ENCODE measurements at regions of chr4 and their contacts with region 1.

Region 1: DNA sequence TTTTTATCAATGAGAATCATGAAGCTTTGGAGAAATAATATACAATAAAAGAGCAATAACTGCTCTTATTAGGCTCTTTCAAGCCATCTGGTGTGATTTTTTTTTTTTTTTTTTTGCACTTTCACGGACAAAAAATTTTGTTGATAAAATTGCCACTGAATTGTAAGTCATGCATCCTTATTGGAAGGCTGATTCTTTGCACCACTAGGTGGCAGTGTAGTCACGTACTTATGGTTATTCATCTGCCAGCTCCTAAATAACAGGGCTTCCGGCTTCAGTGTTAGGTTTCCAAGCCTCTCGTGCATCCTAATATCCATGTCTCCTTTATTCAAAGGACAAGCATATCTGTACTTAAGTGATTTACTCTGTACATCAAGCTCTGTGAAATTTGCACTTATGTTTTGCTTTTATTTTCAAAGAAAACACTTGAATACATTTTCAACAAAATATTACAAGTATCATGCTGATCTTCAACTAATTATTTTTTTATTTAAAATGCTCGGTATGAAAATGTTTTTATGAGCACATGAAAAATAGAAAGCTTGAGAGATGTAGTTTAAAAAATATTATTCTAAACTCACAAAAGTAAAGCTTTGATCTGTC is 1578.3 kb upstream of the TENM3 start:
- DNase-seq: peak; percentile 90
- ATAC-seq: peak; percentile 87
- H3K4me3 ChIP-seq: no peak overlapping the region
- H3K27ac ChIP-seq: no peak overlapping the region
- H3K4me1 ChIP-seq: no peaks in the 10 kb centered on the region
- H3K27me3 ChIP-seq: no peaks in the 10 kb centered on the region
- CTCF ChIP-seq: peak; percentile 85
- POLR2A ChIP-seq: no peak
- RAD21 ChIP-seq: peak; percentile 80

Region 2: DNA sequence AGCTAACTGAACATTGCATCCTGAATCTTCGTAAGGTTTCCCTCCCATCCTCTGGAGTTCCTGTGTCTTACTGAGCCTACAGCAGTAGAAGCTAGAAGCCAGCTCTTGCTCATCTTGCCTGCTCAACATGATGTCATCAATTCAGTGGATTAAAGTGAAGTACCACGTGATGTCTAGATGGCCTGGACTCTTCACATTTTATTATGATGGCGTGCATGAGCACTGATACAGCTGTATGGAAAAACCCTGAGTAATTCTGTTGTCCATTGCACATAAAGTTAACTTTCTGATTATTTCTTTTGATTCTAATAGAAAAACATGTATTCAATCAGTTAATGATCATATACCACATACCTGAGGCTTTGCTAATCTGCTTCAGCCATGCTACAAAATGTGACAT is 809.4 kb before region 1 on chr4:
- CTCF ChIA-PET with region 1: no interaction called
- POLR2A ChIA-PET with region 1: no interaction called
- dilution Hi-C with region 1: no loop called
- in situ Hi-C with region 1: no loop called
- intact Hi-C with region 1: no loop called
- DNase-seq: peak; percentile 57
- ATAC-seq: no peak
- H3K4me3 ChIP-seq: no peak overlapping the region
- H3K27ac ChIP-seq: no peak overlapping the region
- H3K4me1 ChIP-seq: no peaks in the 10 kb centered on the region
- H3K27me3 ChIP-seq: no peaks in the 10 kb centered on the region
- CTCF ChIP-seq: no peak
- POLR2A ChIP-seq: no peak
- RAD21 ChIP-seq: no peak

Region 3: GRCh38 chr4:180784940-180785339 is 120.1 kb after region 1 on chr4:
- CTCF ChIA-PET with region 1: no interaction called
- POLR2A ChIA-PET with region 1: no interaction called
- dilution Hi-C with region 1: no loop called
- in situ Hi-C with region 1: no loop called
- intact Hi-C with region 1: loop called (anchors 1 kb)
- DNase-seq: no peak
- ATAC-seq: no peak
- H3K4me3 ChIP-seq: no peak overlapping the region
- H3K27ac ChIP-seq: no peak overlapping the region
- H3K4me1 ChIP-seq: no peaks in the 10 kb centered on the region
- H3K27me3 ChIP-seq: no peaks in the 10 kb centered on the region
- CTCF ChIP-seq: no peak
- POLR2A ChIP-seq: no peak
- RAD21 ChIP-seq: no peak

Region 4: DNA sequence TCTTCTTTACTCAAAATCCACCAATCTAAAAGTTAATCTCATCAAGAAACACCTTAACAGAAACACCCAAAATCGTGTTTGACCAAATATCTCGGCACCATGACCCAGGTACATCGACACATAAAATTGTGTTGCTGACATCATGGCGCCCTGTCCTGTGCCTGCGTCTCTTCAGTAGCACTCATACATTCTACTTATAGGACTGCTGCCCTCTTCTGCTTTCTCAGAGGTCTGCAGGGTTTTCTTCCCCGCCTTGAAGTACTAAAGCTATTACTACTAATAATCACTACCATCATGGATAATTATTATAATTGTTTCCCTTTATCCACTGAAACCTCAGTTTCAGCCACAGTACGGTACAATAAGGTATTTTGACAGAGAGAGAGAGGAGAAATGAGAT is 175.3 kb after region 1 on chr4:
- CTCF ChIA-PET with region 1: interaction called, 3 read pairs
- POLR2A ChIA-PET with region 1: no interaction called
- dilution Hi-C with region 1: no loop called
- in situ Hi-C with region 1: no loop called
- intact Hi-C with region 1: loop called (anchors 5 kb)
- DNase-seq: no peak
- ATAC-seq: no peak
- H3K4me3 ChIP-seq: no peak overlapping the region
- H3K27ac ChIP-seq: no peak overlapping the region
- H3K4me1 ChIP-seq: no peaks in the 10 kb centered on the region
- H3K27me3 ChIP-seq: no peaks in the 10 kb centered on the region
- CTCF ChIP-seq: peak; percentile 16; the same call in 1 of the 2 replicates
- POLR2A ChIP-seq: no peak
- RAD21 ChIP-seq: no peak

Region 5: DNA sequence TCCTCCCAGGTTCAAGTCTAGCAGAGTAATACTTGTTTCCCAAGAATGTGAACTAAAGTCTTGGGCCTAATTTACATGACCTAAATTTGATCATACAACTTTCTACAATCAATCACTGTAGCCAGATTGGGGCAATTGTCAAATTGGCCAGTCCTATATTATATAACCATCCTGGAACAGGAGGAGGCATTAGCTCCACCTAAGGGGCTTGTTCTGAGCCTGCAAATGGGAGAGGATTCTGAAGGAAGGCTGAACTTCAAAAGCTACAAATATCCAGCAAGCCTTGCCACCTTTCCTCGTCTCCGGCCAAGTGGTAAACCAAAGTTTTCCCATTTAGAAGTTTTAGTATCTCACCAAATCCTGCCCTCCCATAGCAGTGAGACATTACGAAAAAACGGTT is 288.7 kb after region 1 on chr4:
- CTCF ChIA-PET with region 1: no interaction called
- POLR2A ChIA-PET with region 1: no interaction called
- dilution Hi-C with region 1: loop called (anchors 25 kb)
- in situ Hi-C with region 1: loop called (anchors 10 kb)
- intact Hi-C with region 1: no loop called
- DNase-seq: peak; percentile 4
- ATAC-seq: no peak
- H3K4me3 ChIP-seq: no peak overlapping the region
- H3K27ac ChIP-seq: no peak overlapping the region
- H3K4me1 ChIP-seq: no peaks in the 10 kb centered on the region
- H3K27me3 ChIP-seq: no peaks in the 10 kb centered on the region
- CTCF ChIP-seq: 0 out of 2 replicates have a peak, but pooled peaks have one; percentile 16
- POLR2A ChIP-seq: no peak
- RAD21 ChIP-seq: no peak

Region 6: DNA sequence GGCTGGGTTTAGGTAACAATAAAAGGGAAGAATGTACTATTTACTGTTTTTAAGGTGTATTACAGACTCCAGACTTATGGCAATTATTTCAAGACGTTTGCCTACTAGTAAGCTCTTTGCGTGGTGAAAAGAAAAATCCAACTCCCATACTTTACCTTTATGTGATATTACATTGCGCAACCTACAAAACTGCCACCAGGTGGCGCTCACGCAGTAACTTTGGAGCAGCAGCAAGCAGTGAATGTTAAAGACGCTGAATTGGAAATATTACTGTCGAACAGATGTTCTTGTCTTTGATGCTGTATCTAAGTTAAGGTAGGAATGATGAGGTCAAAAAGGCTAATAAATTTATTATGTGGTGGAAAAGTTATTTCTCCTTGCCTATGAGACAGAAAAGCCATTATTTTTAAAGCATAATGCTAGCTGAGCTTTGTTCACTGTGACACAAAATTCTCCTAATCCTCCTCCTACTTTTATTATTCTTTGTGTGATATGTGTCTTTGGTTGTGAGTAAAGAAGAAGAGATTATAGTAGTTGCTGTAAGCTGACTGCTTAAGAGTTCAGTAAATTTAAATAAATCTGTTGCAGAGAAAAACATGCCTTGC is 478.5 kb after region 1 on chr4:
- CTCF ChIA-PET with region 1: no interaction called
- POLR2A ChIA-PET with region 1: no interaction called
- dilution Hi-C with region 1: no loop called
- in situ Hi-C with region 1: no loop called
- intact Hi-C with region 1: loop called (anchors 2 kb)
- DNase-seq: peak; percentile 72
- ATAC-seq: peak; percentile 77
- H3K4me3 ChIP-seq: no peak overlapping the region
- H3K27ac ChIP-seq: no peak overlapping the region
- H3K4me1 ChIP-seq: no peaks in the 10 kb centered on the region
- H3K27me3 ChIP-seq: no peaks in the 10 kb centered on the region
- CTCF ChIP-seq: peak; percentile 91
- POLR2A ChIP-seq: no peak
- RAD21 ChIP-seq: peak; percentile 90

Measured in IMR-90 (cell line).